Stomach (tissue), 19 donors: ENCODE measurements at regions of chr14 and their contacts with region 1.

Region 1: DNA sequence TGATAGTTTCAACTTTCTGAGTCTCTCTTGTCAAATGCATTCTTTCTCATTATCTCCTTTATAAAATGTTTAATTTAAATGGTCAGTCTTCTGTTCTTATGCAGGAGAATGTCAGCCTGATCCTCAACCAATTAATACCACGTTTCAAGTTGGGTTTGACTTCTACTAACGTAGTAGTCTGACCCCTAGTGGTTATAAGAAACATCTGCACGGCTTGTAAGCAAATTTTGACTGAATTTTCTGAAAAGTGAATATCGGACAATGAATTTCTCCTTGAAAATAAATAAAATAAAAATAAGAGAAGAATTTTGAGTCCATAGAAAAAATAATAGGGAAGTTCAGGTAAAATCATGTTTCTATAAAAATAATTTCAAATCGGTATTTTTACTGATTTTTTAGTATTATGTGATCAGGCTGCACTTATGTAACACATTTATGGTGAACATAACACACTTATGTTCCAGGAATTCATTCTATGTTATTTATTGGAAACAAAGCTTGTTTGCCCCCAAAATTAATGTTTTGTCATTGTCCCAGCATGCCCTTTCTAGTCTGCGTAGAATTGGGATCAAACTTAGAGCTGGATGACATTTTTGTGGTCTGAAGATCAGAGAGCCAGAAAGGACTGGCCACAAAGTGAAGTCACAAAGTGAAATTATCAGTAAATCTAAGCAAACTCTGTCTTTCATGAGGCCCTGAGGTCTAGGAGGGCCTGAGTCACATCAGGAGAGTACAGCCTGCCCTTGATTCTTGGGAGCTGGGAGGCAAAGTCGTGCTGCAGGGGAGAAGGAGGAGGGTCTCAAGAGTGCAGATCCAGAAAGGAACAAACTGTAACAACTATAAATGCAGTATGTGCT is 101.2 kb upstream of the STXBP6 start:
- DNase-seq: peak in 1 of 2 donors; percentile 60
- H3K4me3 ChIP-seq: no peak overlapping the region
- H3K27ac ChIP-seq: no peak overlapping the region
- H3K4me1 ChIP-seq: no peaks in the 10 kb centered on the region
- H3K27me3 ChIP-seq: no peaks in the 10 kb centered on the region
- CTCF ChIP-seq: peak in 5 of 7 experiments; percentile 68 to 84 (median 73)
- EP300 ChIP-seq: no peak
- POLR2A ChIP-seq: no peak

Region 2: GRCh38 chr14:24734878-24735500 is 416.2 kb before region 1 on chr14:
- intact Hi-C with region 1: loop called (anchors 10 kb)
- DNase-seq: peak; percentile 30 to 84
- H3K4me3 ChIP-seq: no peak overlapping the region
- H3K27ac ChIP-seq: no peak overlapping the region
- H3K4me1 ChIP-seq: no peaks in the 10 kb centered on the region
- H3K27me3 ChIP-seq: no peaks in the 10 kb centered on the region
- CTCF ChIP-seq: peak in 5 of 7 experiments; percentile 47 to 70 (median 60)
- EP300 ChIP-seq: no peak
- POLR2A ChIP-seq: no peak

Region 3: DNA sequence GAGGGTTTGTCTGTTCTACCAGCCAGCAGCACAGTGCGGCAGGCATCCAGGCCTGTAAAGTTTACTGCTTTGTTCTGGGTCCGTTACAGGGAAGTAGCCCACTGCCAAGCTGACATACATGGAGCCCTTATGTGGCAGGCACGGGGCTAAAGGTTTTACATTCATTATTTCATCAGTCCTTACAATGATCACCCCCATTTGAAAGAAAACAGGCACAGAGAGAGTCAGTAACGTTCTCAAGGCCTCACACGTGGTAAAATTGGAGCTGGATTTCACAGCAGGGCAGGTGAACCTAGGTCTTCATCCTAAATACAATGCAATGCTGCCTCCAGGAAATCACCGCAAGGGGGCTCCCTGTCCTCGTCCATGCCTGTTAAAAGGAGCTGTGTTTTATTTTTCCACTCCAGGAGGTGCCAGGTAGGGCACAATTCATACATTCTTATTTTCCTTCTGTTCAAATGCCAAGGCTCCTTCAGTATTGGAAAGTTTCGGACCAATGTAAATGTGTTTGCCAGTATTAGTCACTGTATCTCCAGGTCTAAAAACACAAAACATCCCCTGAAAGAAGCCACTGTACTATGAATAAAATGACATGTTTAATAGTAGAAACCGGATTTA is 345.0 kb before region 1 on chr14:
- intact Hi-C with region 1: loop called (anchors 5 kb)
- DNase-seq: peak; percentile 85 to 88
- H3K4me3 ChIP-seq: no peak overlapping the region
- H3K27ac ChIP-seq: no peak overlapping the region
- H3K4me1 ChIP-seq: peaks cover 0 to 24% (median 14%) of the 10 kb centered on the region in 4 donors
- H3K27me3 ChIP-seq: no peaks in the 10 kb centered on the region
- CTCF ChIP-seq: peak in 5 of 7 experiments; percentile 69 to 89 (median 79)
- EP300 ChIP-seq: no peak
- POLR2A ChIP-seq: no peak

Region 4: DNA sequence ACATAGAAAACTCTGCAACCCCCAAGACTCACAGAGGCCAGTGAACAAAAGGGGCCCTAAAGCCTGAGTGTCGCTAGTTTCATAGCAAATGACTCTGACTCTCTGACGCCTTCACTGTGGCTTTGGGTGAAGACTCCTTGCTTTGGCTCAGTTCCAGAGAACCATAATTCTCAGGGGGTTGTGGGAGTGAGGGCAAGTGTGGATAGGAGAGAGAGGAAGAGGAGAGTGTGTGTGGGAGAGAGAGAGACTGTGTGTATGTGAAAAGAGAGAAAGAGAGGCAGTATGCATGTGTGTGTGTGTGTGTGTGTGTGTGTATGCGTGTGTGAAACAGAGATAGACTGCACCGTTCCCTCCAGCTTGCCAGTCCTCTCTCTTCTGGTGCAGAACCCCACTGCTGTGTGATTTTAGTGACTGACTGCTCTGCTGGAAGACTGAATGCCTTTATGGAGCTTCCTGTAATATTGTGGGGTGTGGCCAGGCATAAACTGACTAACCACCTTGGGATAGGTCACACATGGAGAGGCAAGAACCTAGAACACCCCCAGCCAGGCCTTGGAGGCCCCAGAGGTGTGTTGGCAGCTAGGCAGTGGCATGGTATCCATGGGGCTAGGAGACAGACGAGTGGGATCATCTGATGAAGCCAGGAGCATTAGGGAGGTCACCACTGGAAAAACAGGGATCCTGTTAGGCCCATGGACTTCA is 55.3 kb before region 1 on chr14:
- intact Hi-C with region 1: no loop called
- DNase-seq: peak in 1 of 2 donors; percentile 35
- H3K4me3 ChIP-seq: no peak overlapping the region
- H3K27ac ChIP-seq: no peak overlapping the region
- H3K4me1 ChIP-seq: peaks cover 0 to 10% (median 0%) of the 10 kb centered on the region in 4 donors
- H3K27me3 ChIP-seq: no peaks in the 10 kb centered on the region
- CTCF ChIP-seq: no peak
- EP300 ChIP-seq: no peak
- POLR2A ChIP-seq: no peak